AG04449 (cell line): ENCODE measurements at regions of chr12 and their contacts with region 1.

Region 1: DNA sequence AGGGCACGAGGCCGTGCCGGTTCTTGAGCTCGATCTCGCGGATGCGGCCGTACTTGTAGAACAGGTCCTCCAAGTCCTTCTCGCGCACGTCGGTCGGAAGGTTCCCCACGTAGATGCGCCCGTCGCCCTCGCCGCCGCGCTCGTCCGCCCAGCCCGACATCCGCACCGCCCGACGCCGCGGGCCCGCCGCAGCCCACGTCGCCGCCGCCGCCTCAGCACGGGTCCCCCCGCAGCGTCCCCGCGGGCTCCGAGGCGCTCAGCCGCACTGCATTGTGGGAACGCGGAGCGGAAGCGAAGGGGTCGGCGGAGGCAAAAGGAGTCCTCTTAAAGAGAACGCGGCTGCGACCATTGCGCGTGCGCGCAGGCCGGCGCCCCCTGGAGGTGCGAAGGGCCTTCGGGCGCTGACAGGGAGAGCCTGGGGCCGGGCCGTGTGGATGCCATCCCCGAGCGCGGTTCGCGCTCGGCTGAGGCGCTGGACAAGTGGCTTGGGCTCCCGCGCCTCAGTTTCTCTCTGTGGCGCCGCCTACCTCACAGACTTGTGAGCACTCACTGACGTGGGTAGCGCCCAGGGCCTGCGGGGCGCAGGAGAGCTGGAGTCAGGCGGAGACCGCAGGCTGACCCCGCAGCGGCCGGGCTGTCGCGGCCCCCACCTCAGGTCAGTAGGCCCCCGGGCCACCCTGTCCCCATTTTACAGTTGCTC is at the start of gene SRSF9:
- DNase-seq: peak; percentile 75
- H3K4me3 ChIP-seq: peak within 1 kb of the TSS; percentile 96
- CTCF ChIP-seq: peak; percentile 96

Region 2: GRCh38 chr12:120301962-120302815 is 167.4 kb before region 1 on chr12 and contains the start of gene SIRT4:
- CTCF ChIA-PET with region 1: interaction called, 11 read pairs
- POLR2A ChIA-PET with region 1: no interaction called
- DNase-seq: peak; percentile 65
- H3K4me3 ChIP-seq: peak within 1 kb of the TSS; percentile 77
- CTCF ChIP-seq: peak; percentile 71

Region 3: GRCh38 chr12:120445911-120446843 is 23.4 kb before region 1 on chr12 and contains the starts of genes GATC and TRIAP1:
- CTCF ChIA-PET with region 1: interaction called, 242 read pairs
- POLR2A ChIA-PET with region 1: interaction called, 4 read pairs
- DNase-seq: no peak
- H3K4me3 ChIP-seq: peak within 1 kb of the TSS; percentile 100
- CTCF ChIP-seq: no peak

Region 4: GRCh38 chr12:120483621-120484020 is 14.0 kb after region 1 on chr12:
- CTCF ChIA-PET with region 1: interaction called, 152 read pairs
- POLR2A ChIA-PET with region 1: no interaction called
- DNase-seq: no peak
- H3K4me3 ChIP-seq: no peak overlapping the region
- CTCF ChIP-seq: no peak

Region 5: GRCh38 chr12:120495723-120496412 is 26.3 kb after region 1 on chr12 and contains the start of gene DYNLL1:
- CTCF ChIA-PET with region 1: interaction called, 152 read pairs
- POLR2A ChIA-PET with region 1: interaction called, 8 read pairs
- DNase-seq: peak; percentile 54
- H3K4me3 ChIP-seq: peak within 1 kb of the TSS; percentile 91
- CTCF ChIP-seq: no peak

Region 6: DNA sequence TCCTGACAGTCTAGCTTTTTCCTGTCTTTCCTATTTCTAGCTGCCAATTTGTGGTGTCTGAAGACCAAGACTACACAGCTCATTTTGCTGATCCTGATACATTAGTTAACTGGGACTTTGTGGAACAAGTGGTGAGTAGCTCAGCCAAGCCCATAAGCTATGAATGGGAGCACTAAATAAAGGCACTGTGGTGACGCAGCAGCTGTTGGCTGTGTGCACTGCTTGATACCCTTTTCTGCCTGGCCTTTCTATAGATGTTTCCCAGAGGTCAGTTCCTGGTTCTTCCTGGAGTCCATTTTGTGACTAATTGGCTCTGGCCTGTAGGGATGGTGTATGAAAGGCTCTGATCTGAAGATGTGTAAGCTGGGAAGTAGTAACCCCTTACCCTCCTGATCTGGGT is 85.1 kb after region 1 on chr12:
- CTCF ChIA-PET with region 1: no interaction called
- POLR2A ChIA-PET with region 1: no interaction called
- DNase-seq: no peak
- H3K4me3 ChIP-seq: no peak overlapping the region
- CTCF ChIP-seq: no peak

Region 7: GRCh38 chr12:120610560-120610959 is 141.0 kb after region 1 on chr12:
- CTCF ChIA-PET with region 1: no interaction called
- POLR2A ChIA-PET with region 1: no interaction called
- DNase-seq: no peak
- H3K4me3 ChIP-seq: no peak overlapping the region
- CTCF ChIP-seq: no peak

Region 8: DNA sequence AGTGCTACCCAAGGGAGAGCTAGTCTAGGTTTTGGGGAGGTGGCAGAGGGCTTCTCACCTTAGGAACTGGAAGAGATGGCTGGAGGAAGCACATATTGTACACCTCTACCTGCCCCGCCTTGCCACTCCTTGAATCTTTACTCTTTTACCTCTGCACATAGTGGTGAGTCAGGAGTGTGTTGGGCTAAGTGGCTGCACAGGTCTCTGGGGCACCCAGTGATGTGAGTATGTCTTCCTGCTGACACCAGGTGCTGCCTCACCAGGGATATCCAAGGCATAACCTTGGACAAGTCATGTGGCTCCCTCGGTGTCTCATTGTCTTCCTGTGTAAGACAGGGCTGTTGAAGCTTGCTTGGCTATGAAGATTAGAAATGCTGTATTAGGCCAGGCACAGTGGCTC is 151.0 kb after region 1 on chr12:
- CTCF ChIA-PET with region 1: no interaction called
- POLR2A ChIA-PET with region 1: no interaction called
- DNase-seq: no peak
- H3K4me3 ChIP-seq: no peak overlapping the region
- CTCF ChIP-seq: no peak

Region 9: DNA sequence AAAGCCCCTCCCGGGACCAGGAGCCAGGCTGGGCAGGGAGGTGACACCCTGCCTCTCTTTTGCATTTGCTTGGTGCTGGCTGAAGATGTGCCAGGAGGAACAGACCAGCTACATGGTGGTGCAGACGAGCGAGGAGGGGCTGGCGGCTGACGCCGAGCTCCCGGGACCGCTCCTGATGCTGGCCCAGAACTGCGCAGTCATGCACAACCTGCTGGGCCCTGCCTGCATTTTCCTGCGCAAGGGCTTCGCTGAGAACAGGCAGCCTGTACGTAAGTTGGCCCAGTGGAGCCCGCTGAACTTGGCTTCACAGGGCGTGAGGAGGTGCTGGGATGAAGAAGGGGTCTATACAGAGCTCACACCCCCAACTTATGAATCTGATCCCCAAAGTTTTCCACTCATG is 186.4 kb after region 1 on chr12:
- CTCF ChIA-PET with region 1: no interaction called
- POLR2A ChIA-PET with region 1: no interaction called
- DNase-seq: no peak
- H3K4me3 ChIP-seq: no peak overlapping the region
- CTCF ChIP-seq: no peak